ENCODE measurements at regions of chr18 and their contacts with region 1.

Region 1: GRCh38 chr18:43563780-43564179 is 286.5 kb upstream of the SYT4 start:
- DNase-seq: no peak
- ATAC-seq: no peak
- H3K4me3 Mint-ChIP-seq: no peak overlapping the region
- H3K27ac Mint-ChIP-seq: no peak overlapping the region
- H3K4me1 Mint-ChIP-seq: no peaks in the 10 kb centered on the region
- H3K27me3 Mint-ChIP-seq: no peaks in the 10 kb centered on the region

Region 2: GRCh38 chr18:43271593-43272432 is 292.0 kb before region 1 on chr18:
- CTCF ChIA-PET with region 1: no interaction called
- POLR2A ChIA-PET with region 1: no interaction called
- intact Hi-C with region 1: loop called in 1 of 2 experiments (anchors 10 kb)
- DNase-seq: peak; percentile 26
- ATAC-seq: no peak
- H3K4me3 Mint-ChIP-seq: no peak overlapping the region
- H3K27ac Mint-ChIP-seq: no peak overlapping the region
- H3K4me1 Mint-ChIP-seq: no peaks in the 10 kb centered on the region
- H3K27me3 Mint-ChIP-seq: peaks cover 2% of the 10 kb centered on the region

Region 3: DNA sequence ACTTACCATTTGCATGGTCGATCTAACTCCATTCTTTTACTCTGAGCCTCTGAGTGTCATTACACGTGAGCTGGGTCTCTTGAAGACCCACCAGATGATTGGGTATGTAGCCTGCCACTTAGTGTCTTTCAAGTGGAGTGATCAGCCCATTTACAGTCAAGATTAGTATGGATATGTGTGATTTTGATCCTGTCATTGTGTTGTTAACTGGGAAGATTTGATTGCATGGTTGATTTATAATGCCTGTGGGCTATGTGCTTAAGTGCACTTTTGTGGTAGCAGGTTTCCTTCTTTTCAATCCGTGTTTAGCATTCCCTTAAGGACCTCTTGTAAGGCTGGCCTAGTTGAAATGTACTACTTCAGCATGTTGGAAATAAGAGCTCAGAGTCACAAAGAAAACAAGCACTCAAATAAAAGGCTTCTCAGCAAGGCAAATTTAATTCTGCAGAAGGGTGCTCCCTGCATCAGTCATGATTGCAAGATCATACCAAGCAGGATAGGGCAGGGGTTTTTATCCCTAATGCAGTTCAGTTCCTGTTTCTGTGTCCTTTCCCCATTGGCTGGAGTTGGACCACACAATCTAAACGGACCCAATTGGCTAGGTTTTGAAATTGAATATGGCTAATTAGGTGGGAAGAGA is 55.8 kb before region 1 on chr18:
- CTCF ChIA-PET with region 1: no interaction called
- POLR2A ChIA-PET with region 1: no interaction called
- intact Hi-C with region 1: loop called in 1 of 2 experiments (anchors 5 kb)
- DNase-seq: no peak
- ATAC-seq: no peak
- H3K4me3 Mint-ChIP-seq: no peak overlapping the region
- H3K27ac Mint-ChIP-seq: no peak overlapping the region
- H3K4me1 Mint-ChIP-seq: no peaks in the 10 kb centered on the region
- H3K27me3 Mint-ChIP-seq: no peaks in the 10 kb centered on the region

Region 4: DNA sequence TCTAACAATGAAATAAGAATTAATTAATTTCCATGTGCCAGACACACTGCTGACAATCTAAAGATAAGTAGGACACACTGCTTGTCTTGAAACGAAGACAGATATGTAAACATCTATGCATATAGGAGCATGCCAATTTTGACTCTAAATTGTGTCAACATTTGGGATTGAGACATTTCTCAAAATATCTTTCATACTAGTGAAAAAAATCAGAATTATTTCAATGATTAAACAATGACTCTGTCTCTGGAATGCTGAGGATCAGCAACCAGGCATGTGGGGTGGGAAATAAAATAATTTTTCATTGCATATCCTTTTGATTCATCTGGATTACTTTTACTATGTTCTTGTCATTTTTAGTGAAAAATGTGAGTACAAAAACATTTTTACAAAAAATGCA is 23.9 kb before region 1 on chr18:
- CTCF ChIA-PET with region 1: no interaction called
- POLR2A ChIA-PET with region 1: no interaction called
- intact Hi-C with region 1: no loop called
- DNase-seq: no peak
- ATAC-seq: no peak
- H3K4me3 Mint-ChIP-seq: no peak overlapping the region
- H3K27ac Mint-ChIP-seq: no peak overlapping the region
- H3K4me1 Mint-ChIP-seq: no peaks in the 10 kb centered on the region
- H3K27me3 Mint-ChIP-seq: no peaks in the 10 kb centered on the region

Region 5: DNA sequence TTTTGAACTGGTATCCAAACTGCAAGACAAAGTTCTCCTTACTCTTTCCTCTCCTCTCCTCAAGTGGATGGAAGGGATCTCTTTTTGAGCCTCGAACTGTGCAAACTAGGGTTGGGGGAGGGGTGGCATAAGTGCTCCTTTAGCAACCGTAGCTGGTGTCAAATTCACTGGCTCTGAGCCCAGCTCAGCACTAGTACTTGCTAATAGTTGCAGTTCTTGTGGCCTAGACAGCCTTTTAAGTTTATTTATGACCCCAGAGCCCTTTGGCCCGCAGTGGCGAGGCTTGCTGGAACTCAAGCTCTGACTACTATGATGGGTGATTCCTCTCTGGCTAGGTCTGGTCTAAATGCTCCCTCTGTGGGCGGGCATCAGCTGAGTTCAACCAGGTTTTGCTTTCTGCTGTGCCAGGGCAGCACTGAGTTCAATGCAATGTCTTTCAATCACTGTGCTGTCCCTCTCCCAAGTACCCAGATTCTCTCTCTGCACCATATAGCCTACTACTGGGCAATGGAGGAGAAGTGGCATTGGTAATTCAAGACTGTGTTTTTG is 241.9 kb after region 1 on chr18:
- CTCF ChIA-PET with region 1: no interaction called
- POLR2A ChIA-PET with region 1: no interaction called
- intact Hi-C with region 1: no loop called
- DNase-seq: no peak
- ATAC-seq: no peak
- H3K4me3 Mint-ChIP-seq: no peak overlapping the region
- H3K27ac Mint-ChIP-seq: no peak overlapping the region
- H3K4me1 Mint-ChIP-seq: no peaks in the 10 kb centered on the region
- H3K27me3 Mint-ChIP-seq: no peaks in the 10 kb centered on the region